ENCODE measurements at regions of chr5 and their contacts with region 1.

Region 1: GRCh38 chr5:143957455-143957854 is 145.5 kb downstream of the HMHB1 start:
- DNase-seq: no peak
- ATAC-seq: no peak
- H3K4me3 ChIP-seq: no peak overlapping the region
- H3K4me3 Mint-ChIP-seq: no peak overlapping the region
- H3K27ac ChIP-seq: no peak overlapping the region
- H3K27ac Mint-ChIP-seq: no peak overlapping the region
- H3K4me1 ChIP-seq: no peaks in the 10 kb centered on the region
- H3K4me1 Mint-ChIP-seq: no peaks in the 10 kb centered on the region
- H3K27me3 ChIP-seq: no peaks in the 10 kb centered on the region
- H3K27me3 Mint-ChIP-seq: peaks cover 9 to 20% of the 10 kb centered on the region in 2 donors

Region 2: GRCh38 chr5:142129446-142130066 is 1827.9 kb before region 1 on chr5:
- CTCF ChIA-PET with region 1: no interaction called
- POLR2A ChIA-PET with region 1: interaction called in 1 of 2 experiments, 12 read pairs
- DNase-seq: no peak
- ATAC-seq: no peak
- H3K4me3 ChIP-seq: no peak overlapping the region
- H3K4me3 Mint-ChIP-seq: peak overlapping the region in 2 of 3 donors; percentile 7 to 69
- H3K27ac ChIP-seq: no peak overlapping the region
- H3K27ac Mint-ChIP-seq: peak overlapping the region; percentile 58 to 81
- H3K4me1 ChIP-seq: peaks cover 22 to 28% of the 10 kb centered on the region in 2 experiments
- H3K4me1 Mint-ChIP-seq: peaks cover 58 to 65% (median 62%) of the 10 kb centered on the region in 3 donors
- H3K27me3 ChIP-seq: no peaks in the 10 kb centered on the region
- H3K27me3 Mint-ChIP-seq: no peaks in the 10 kb centered on the region

Region 3: DNA sequence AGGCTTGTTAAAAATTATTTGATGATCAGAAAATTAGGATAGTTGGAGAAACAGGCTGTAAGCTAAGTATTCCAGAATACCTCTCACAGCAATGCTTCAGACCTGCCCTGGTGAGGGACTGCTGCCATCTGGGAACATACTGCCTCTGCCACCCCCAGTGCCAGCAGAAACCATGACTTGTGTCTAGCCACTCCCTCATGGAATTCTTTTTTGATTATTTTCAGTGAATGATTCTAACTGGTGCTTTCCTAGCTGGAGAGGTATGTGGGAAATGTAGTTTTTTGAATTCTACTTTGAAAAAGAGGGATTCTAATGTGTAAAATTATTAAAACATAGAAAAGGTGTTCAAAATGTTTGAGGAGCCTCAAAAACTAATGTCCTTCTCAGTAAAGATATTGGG is 19.2 kb before region 1 on chr5:
- CTCF ChIA-PET with region 1: no interaction called
- POLR2A ChIA-PET with region 1: no interaction called
- DNase-seq: no peak
- ATAC-seq: no peak
- H3K4me3 ChIP-seq: no peak overlapping the region
- H3K4me3 Mint-ChIP-seq: no peak overlapping the region
- H3K27ac ChIP-seq: no peak overlapping the region
- H3K27ac Mint-ChIP-seq: no peak overlapping the region
- H3K4me1 ChIP-seq: no peaks in the 10 kb centered on the region
- H3K4me1 Mint-ChIP-seq: no peaks in the 10 kb centered on the region
- H3K27me3 ChIP-seq: no peaks in the 10 kb centered on the region
- H3K27me3 Mint-ChIP-seq: no peaks in the 10 kb centered on the region

Region 4: DNA sequence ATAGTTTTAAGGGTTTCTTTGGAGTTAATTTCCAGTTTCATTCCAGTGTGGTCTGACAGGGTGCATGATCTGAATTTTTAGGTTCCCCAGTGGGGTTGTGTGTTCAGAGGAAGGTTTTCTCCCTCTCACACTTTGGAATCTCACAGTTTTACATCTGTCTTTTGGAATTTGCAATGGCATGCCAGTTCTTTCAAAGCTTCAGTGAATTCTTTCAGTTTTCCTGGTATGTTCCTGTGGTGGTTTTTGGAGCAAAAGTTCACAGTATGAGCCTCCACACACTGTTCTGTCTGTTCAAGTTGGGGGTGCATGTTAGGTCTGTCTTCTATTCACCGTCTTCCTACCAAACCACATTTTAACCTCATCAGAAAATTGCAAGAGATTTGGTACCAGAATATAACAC is 837.5 kb after region 1 on chr5:
- CTCF ChIA-PET with region 1: no interaction called
- POLR2A ChIA-PET with region 1: no interaction called
- DNase-seq: no peak
- ATAC-seq: no peak
- H3K4me3 ChIP-seq: no peak overlapping the region
- H3K4me3 Mint-ChIP-seq: no peak overlapping the region
- H3K27ac ChIP-seq: no peak overlapping the region
- H3K27ac Mint-ChIP-seq: no peak overlapping the region
- H3K4me1 ChIP-seq: no peaks in the 10 kb centered on the region
- H3K4me1 Mint-ChIP-seq: no peaks in the 10 kb centered on the region
- H3K27me3 ChIP-seq: no peaks in the 10 kb centered on the region
- H3K27me3 Mint-ChIP-seq: no peaks in the 10 kb centered on the region